H1 (cell line): ENCODE measurements at regions of chr15 and their contacts with region 1.

Region 1: GRCh38 chr15:59873644-59874272 is 130.4 kb upstream of the FOXB1 start:
- DNase-seq: no peak
- H3K4me3 ChIP-seq: no peak overlapping the region
- H3K27ac ChIP-seq: no peak overlapping the region
- H3K4me1 ChIP-seq: peaks cover 0 to 2% (median 0%) of the 10 kb centered on the region in 4 experiments; a peak in 1 of 7 replicates
- H3K27me3 ChIP-seq: peaks cover 0 to 1% (median 0%) of the 10 kb centered on the region in 4 experiments; a peak in 1 of 7 replicates
- CTCF ChIP-seq: no peak
- EP300 ChIP-seq: no peak
- POLR2A ChIP-seq: no peak
- RAD21 ChIP-seq: no peak

Region 2: GRCh38 chr15:59862191-59863155 is 11.3 kb before region 1 on chr15:
- CTCF ChIA-PET with region 1: interaction called, 10 read pairs
- POLR2A ChIA-PET with region 1: no interaction called
- DNase-seq: peak in 1 of 2 experiments; percentile 27
- H3K4me3 ChIP-seq: no peak overlapping the region
- H3K27ac ChIP-seq: no peak overlapping the region
- H3K4me1 ChIP-seq: peaks cover 0 to 8% (median 1%) of the 10 kb centered on the region in 4 experiments; a peak in 2 of 7 replicates
- H3K27me3 ChIP-seq: no peaks in the 10 kb centered on the region
- CTCF ChIP-seq: no peak
- EP300 ChIP-seq: no peak
- POLR2A ChIP-seq: no peak
- RAD21 ChIP-seq: no peak

Region 3: DNA sequence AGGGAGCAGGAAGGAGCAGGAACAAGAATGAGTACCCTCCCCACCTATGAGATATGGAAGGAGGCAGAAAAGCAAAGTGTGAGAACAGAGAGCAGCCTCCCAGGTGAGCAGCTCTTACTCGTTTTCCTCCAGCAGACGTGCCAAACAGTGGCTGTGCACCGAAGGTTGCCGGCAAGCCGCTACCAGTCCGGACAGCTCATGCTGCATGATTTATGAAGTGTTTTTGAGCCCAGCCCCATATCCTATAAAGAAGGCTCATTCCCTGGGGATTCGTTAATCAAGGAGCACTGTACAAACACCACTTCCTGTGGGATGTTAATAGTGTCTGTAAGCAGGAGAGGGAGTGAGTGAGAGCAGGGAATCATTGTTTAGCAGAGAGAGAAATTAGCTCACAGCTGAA is 12.1 kb after region 1 on chr15:
- CTCF ChIA-PET with region 1: interaction called, 11 read pairs
- POLR2A ChIA-PET with region 1: interaction called, 3 read pairs
- DNase-seq: no peak
- H3K4me3 ChIP-seq: no peak overlapping the region
- H3K27ac ChIP-seq: no peak overlapping the region
- H3K4me1 ChIP-seq: peaks cover 0 to 5% (median 1%) of the 10 kb centered on the region in 4 experiments; a peak in 3 of 7 replicates
- H3K27me3 ChIP-seq: no peaks in the 10 kb centered on the region
- CTCF ChIP-seq: no peak
- EP300 ChIP-seq: no peak
- POLR2A ChIP-seq: no peak
- RAD21 ChIP-seq: no peak

Region 4: GRCh38 chr15:59936741-59937140 is 63.0 kb after region 1 on chr15:
- CTCF ChIA-PET with region 1: no interaction called
- POLR2A ChIA-PET with region 1: no interaction called
- DNase-seq: no peak
- H3K4me3 ChIP-seq: no peak overlapping the region
- H3K27ac ChIP-seq: no peak overlapping the region
- H3K4me1 ChIP-seq: peaks cover 0 to 7% (median 5%) of the 10 kb centered on the region in 4 experiments; a peak in 5 of 7 replicates
- H3K27me3 ChIP-seq: no peaks in the 10 kb centered on the region
- CTCF ChIP-seq: no peak
- EP300 ChIP-seq: no peak
- POLR2A ChIP-seq: no peak
- RAD21 ChIP-seq: no peak

Region 5: GRCh38 chr15:59972241-59972640 is 98.5 kb after region 1 on chr15:
- CTCF ChIA-PET with region 1: no interaction called
- POLR2A ChIA-PET with region 1: no interaction called
- DNase-seq: no peak
- H3K4me3 ChIP-seq: no peak overlapping the region
- H3K27ac ChIP-seq: no peak overlapping the region
- H3K4me1 ChIP-seq: no peaks in the 10 kb centered on the region
- H3K27me3 ChIP-seq: no peaks in the 10 kb centered on the region
- CTCF ChIP-seq: no peak
- EP300 ChIP-seq: no peak
- POLR2A ChIP-seq: no peak
- RAD21 ChIP-seq: no peak